PC-9 (cell line): ENCODE measurements at regions of chr11 and their contacts with region 1.

Region 1: DNA sequence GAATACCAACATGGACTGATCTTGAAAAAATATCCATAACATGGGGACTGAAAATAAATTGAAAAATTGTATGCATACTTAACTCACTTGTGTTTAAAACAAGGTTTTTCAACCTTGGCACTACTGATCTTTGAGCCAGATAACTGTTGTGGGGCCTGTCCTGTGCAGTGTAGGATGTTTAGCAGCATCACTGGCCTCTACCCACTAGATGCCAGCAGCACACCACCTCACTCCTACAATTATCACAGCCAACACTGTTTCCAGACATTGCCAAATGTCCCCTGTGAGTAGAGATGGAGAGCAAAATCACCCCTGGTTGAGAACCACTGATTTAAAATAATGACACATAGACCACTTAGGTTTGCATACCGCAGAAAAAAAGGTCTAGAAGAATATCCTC is 45.0 kb upstream of the SLC1A2 start:
- DNase-seq: no peak
- H3K4me3 ChIP-seq: no peak overlapping the region
- H3K27ac ChIP-seq: no peak overlapping the region
- H3K4me1 ChIP-seq: no peaks in the 10 kb centered on the region
- H3K27me3 ChIP-seq: peaks cover 12% of the 10 kb centered on the region; the same call in 1 of the 2 replicates
- CTCF ChIP-seq: peak; percentile 51; the same call in 1 of the 2 replicates

Region 2: GRCh38 chr11:35412285-35412684 is 52.0 kb before region 1 on chr11:
- CTCF ChIA-PET with region 1: no interaction called
- POLR2A ChIA-PET with region 1: no interaction called
- intact Hi-C with region 1: no loop called
- DNase-seq: no peak
- H3K4me3 ChIP-seq: no peak overlapping the region
- H3K27ac ChIP-seq: no peak overlapping the region
- H3K4me1 ChIP-seq: no peaks in the 10 kb centered on the region
- H3K27me3 ChIP-seq: peaks cover 28% of the 10 kb centered on the region
- CTCF ChIP-seq: peak; percentile 78

Region 3: DNA sequence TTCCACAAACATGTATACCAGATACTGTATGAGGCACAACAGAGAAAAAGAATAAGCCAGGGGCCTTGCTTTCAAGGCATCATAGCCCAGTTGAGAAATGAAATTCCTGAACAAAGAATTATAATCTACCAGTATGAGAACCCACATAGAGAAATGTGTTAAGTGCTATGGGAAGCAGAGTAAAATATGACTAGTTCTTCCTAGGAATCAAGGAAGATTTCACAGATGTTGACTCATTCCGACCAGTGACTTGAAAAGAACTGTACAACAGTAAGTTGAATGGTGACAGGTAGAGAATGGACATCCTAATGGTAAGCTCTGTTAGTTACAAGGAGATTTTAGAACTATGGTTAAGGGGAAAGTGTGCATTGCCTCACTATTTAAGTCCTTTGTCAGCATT is 300.9 kb after region 1 on chr11:
- CTCF ChIA-PET with region 1: interaction called, 19 read pairs
- POLR2A ChIA-PET with region 1: no interaction called
- intact Hi-C with region 1: no loop called
- DNase-seq: no peak
- H3K4me3 ChIP-seq: no peak overlapping the region
- H3K27ac ChIP-seq: no peak overlapping the region
- H3K4me1 ChIP-seq: no peaks in the 10 kb centered on the region
- H3K27me3 ChIP-seq: no peaks in the 10 kb centered on the region
- CTCF ChIP-seq: no peak

Region 4: GRCh38 chr11:36265793-36266628 is 801.7 kb after region 1 on chr11:
- CTCF ChIA-PET with region 1: no interaction called
- POLR2A ChIA-PET with region 1: no interaction called
- intact Hi-C with region 1: loop called (anchors 1 kb)
- DNase-seq: peak; percentile 46 to 63
- H3K4me3 ChIP-seq: no peak overlapping the region
- H3K27ac ChIP-seq: no peak overlapping the region
- H3K4me1 ChIP-seq: no peaks in the 10 kb centered on the region
- H3K27me3 ChIP-seq: no peaks in the 10 kb centered on the region
- CTCF ChIP-seq: peak; percentile 97